ENCODE measurements at regions of chr4 and their contacts with region 1.

Region 1: GRCh38 chr4:75844151-75844662 is 58.0 kb downstream of the PPEF2 start:
- DNase-seq: no peak
- ATAC-seq: no peak

Region 2: DNA sequence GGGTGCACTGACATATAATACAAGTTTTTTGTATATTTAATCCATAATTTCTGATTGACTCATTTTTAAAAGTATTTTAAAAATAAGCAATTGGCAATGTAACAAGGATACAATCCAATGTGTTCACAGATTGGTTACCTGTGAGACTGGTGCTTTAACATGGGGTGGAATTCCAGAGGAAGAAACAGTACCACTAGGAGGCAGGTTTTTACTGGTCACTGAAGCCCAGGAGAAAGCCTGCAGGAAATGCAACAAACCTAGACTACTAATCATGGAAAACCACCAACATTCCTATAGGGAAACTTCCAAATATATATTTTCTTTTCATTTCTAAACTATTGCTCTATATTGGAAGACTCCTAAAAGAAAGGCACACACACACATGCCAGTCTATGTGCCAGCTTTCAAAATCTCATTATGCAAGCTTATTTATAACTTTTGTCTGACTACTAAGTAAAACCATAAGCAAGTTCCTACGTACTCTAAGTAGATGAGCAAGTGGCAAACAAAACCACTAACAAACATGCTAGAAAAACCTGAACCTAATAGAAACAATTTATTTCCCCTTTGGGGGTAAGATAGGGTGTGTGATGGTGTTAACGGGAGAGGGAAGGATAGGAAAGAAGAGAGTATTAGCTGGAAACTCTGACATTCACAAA is 190.2 kb before region 1 on chr4:
- intact Hi-C with region 1: loop called (anchors 10 kb)
- DNase-seq: no peak
- ATAC-seq: no peak

Region 3: GRCh38 chr4:75724066-75724866 is 119.9 kb before region 1 on chr4 and contains the start of gene USO1:
- intact Hi-C with region 1: loop called (anchors 10 kb)
- DNase-seq: peak; percentile 99
- ATAC-seq: peak; percentile 99
- total RNA-seq, gene USO1: 85.0 TPM

Measured in Right ventricle myocardium inferior (tissue), 1 donor.